Heart right ventricle (tissue), 16 donors: ENCODE measurements at regions of chr1 and their contacts with region 1.

Region 1: DNA sequence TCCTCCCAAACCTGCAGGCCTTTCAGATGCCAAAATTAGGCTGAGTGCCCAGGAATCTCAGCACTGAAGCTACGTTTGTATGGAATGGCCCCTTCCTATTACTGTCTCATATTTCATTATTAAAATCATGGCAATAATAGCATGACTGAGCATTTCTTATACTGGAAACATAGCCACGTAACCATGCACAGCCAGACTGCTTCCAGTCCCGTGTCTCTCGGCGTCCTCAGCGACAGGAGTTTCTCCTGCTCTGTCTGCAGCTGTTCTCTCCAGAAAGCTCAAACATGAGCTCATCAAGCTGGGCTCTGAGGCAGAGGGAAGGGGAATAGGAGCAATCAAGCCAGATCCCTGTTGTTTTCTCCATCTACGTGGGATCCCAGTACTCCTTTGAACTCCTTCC is 104.0 kb downstream of the CDC7 start:
- DNase-seq: peak in 1 of 2 donors; percentile 35
- ATAC-seq: peak in 6 of 8 donors; percentile 9 to 53 (median 37)
- H3K4me3 ChIP-seq: no peak overlapping the region
- H3K27ac ChIP-seq: peak overlapping the region in 8 of 10 donors; percentile 23 to 59 (median 44)
- H3K4me1 ChIP-seq: peaks cover 0 to 38% (median 6%) of the 10 kb centered on the region in 9 donors
- H3K27me3 ChIP-seq: no peaks in the 10 kb centered on the region
- CTCF ChIP-seq: no peak

Region 2: DNA sequence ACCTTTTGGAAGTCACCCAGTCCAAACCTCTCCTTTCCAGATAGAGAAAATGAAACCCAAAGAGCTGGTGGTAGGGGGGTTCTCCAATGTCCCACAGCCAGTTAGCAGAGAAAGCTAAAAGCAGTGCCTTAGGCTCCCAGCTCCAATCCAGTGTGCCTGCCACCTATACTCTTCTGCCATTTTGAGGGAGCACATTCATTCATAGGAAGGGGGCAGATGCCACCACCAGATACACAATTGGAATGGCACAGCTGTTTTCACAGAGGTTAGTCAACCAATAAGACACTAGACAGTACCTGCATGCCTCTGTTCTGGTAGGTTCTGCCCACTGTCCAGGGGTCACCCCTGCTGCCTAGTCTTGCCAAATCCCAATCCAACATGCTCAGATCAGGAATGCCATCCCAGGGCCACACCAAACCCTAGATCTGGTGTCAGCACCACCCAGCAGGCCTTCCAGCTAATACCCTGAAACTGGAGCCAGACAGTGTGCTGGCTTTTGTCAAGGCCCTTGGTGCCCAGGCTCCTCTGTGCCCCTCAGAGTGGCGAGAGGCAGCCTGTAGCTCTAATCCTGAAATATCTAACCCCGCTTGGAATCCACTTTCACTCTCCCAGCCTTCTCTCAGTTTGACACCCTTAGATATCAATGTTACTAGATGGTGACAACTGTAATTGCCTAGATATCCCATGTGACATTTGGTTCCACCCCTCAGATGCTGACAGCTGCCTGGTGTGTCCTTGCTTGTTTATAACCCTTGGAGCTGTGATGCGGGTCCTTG is 102.7 kb after region 1 on chr1:
- intact Hi-C with region 1: loop called in 2 of 10 experiments (anchors 1 to 5 kb)
- DNase-seq: peak; percentile 42 to 61
- ATAC-seq: peak; percentile 68 to 94 (median 86)
- H3K4me3 ChIP-seq: no peak overlapping the region
- H3K27ac ChIP-seq: peak overlapping the region; percentile 1 to 81 (median 66)
- H3K4me1 ChIP-seq: peaks cover 3 to 69% (median 22%) of the 10 kb centered on the region in 9 donors
- H3K27me3 ChIP-seq: no peaks in the 10 kb centered on the region
- CTCF ChIP-seq: no peak

Region 3: DNA sequence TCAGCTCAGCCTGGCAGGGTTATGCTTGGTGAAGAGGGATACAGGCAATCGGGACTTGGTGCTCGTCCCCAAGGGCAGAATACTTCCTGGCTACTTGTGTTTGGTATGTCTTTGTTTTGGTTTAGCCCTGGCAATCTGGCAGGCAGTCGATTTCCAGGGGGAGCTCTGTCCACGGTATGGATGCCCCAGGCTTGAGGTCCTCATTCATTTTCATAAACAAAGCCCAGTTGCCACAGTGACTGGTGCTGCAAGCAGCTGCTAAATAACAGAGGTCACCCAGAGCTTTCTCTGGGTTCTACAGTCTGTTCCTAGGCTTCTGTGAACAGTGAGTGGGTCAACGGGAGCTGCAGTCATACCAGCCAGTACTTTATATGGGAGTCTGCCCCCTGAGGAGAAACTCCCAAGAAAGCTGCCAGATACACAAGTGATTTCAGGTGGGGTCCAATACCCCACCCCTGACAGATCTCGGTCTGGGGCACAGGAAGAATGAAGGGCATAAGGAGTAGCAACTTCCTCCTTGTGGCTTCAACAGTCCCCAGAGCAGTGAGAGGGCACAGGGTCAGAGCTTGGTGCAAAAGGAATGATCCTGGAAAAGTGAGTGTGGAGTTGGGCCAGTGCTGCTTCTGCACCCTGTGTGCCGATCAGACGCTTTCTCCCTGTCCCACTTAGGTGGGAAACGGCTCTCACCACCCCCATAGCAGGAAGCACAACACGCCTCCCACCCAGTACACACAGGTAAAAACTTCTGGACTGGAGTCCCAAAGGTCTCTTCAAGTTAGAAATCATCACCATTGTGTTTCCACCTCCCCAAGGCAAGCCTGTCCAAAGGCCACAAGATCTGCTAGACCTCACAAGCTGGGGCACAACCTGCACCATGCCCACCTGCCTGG is 225.9 kb after region 1 on chr1:
- intact Hi-C with region 1: no loop called
- DNase-seq: peak; percentile 72 to 87
- ATAC-seq: peak; percentile 72 to 88 (median 78)
- H3K4me3 ChIP-seq: no peak overlapping the region
- H3K27ac ChIP-seq: peak overlapping the region; percentile 56 to 88 (median 78)
- H3K4me1 ChIP-seq: peaks cover 17 to 58% (median 42%) of the 10 kb centered on the region in 9 donors
- H3K27me3 ChIP-seq: no peaks in the 10 kb centered on the region
- CTCF ChIP-seq: peak in 7 of 9 donors; percentile 35 to 71 (median 41)